Activated CD8-positive, alpha-beta T cell treated with anti-CD3 and anti-CD28 coated beads, Interleukin-2, amount 10 ng/mL, durations not matched to agents 7 days and 5 days (primary cell): ENCODE measurements at regions of chr2 and their contacts with region 1.

Region 1: DNA sequence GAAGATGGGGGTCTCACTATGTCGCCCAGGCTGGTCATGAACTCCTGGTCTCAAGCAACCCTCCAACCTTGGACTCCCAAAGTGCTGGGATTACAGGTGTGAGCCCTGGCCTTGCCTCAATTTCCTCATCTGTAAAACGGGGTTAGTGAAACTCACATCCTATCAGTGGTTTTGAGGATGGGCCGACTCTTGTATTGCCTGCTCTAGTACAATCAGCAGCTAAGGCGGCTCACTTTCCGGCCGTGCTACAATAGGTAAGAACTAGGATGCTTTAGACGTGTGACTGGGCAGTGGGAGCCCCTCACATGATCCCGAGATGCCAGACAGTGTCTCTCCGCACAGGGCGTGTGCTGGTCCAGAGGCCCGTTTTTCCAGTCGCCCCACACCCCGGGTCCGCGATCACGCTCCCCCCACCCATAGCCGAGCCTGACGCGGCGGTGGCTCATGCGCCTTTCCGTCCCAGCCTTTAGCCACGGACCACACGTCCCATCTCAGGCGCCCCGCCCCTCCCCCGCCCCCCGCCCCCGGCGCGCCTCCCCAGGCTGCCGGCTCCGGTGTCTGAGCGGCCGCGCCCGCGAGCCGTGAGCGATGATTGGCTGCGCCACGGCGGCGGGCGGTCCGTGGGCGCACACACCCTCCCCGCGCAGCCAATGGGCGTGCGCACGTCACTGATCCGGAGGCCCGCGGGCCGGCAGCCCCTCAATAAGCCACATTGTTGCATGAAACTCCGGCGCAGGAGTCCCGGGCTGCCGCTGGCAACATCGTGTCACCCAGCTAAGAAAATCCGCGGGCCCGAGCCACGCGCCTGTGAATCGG is at the start of gene HK2:
- DNase-seq: peak; percentile 87
- ATAC-seq: peak; percentile 89
- H3K4me3 Mint-ChIP-seq: peak within 1 kb of the TSS; percentile 94
- H3K27ac Mint-ChIP-seq: peak within 1 kb of the TSS; percentile 93
- H3K4me1 Mint-ChIP-seq: peaks cover 50% of the 10 kb centered on the region
- H3K27me3 Mint-ChIP-seq: peaks cover 8% of the 10 kb centered on the region
- total RNA-seq, gene HK2: 42.6 to 44.7 TPM

Region 2: GRCh38 chr2:74819702-74820101 is 13.9 kb before region 1 on chr2:
- CTCF ChIA-PET with region 1: interaction called, 11 read pairs
- POLR2A ChIA-PET with region 1: interaction called, 4 read pairs
- DNase-seq: no peak
- ATAC-seq: peak; percentile 77
- H3K4me3 Mint-ChIP-seq: no peak overlapping the region
- H3K27ac Mint-ChIP-seq: no peak overlapping the region
- H3K4me1 Mint-ChIP-seq: peaks cover 20% of the 10 kb centered on the region
- H3K27me3 Mint-ChIP-seq: peaks cover 20% of the 10 kb centered on the region

Region 3: DNA sequence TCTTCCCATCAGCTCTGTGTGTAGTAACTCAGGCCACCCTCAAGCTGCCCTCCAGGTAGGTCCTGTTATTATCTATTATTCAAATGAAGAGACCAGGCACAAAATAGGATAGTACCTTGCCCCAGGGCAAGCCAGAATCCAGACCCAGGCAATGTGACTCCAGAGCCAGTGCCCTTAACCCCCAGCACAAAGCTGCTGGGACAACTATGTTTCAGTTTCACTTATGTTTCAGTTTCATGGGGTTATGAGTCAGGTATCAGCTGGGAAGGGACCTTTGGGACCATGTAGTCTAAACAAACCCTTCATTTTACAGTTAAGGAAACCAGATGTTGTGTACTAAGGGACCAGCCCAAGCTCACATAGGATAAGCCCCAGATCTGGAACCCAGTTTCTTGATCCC is 10.3 kb after region 1 on chr2:
- CTCF ChIA-PET with region 1: interaction called, 75 read pairs
- POLR2A ChIA-PET with region 1: interaction called, 11 read pairs
- DNase-seq: peak; percentile 59
- ATAC-seq: peak; percentile 83
- H3K4me3 Mint-ChIP-seq: peak overlapping the region; percentile 56
- H3K27ac Mint-ChIP-seq: peak overlapping the region; percentile 78
- H3K4me1 Mint-ChIP-seq: peaks cover 95% of the 10 kb centered on the region
- H3K27me3 Mint-ChIP-seq: no peaks in the 10 kb centered on the region

Region 4: GRCh38 chr2:74849228-74849892 is 15.7 kb after region 1 on chr2:
- CTCF ChIA-PET with region 1: interaction called, 75 read pairs
- POLR2A ChIA-PET with region 1: interaction called, 11 read pairs
- DNase-seq: peak; percentile 57
- ATAC-seq: peak; percentile 82
- H3K4me3 Mint-ChIP-seq: peak overlapping the region; percentile 69
- H3K27ac Mint-ChIP-seq: peak overlapping the region; percentile 92
- H3K4me1 Mint-ChIP-seq: peaks cover 70% of the 10 kb centered on the region
- H3K27me3 Mint-ChIP-seq: no peaks in the 10 kb centered on the region

Region 5: GRCh38 chr2:74864846-74865722 is 31.5 kb after region 1 on chr2:
- CTCF ChIA-PET with region 1: interaction called, 24 read pairs
- POLR2A ChIA-PET with region 1: interaction called, 3 read pairs
- DNase-seq: no peak
- ATAC-seq: no peak
- H3K4me3 Mint-ChIP-seq: no peak overlapping the region
- H3K27ac Mint-ChIP-seq: no peak overlapping the region
- H3K4me1 Mint-ChIP-seq: peaks cover 44% of the 10 kb centered on the region
- H3K27me3 Mint-ChIP-seq: no peaks in the 10 kb centered on the region

Region 6: GRCh38 chr2:74876081-74876886 is 42.7 kb after region 1 on chr2:
- CTCF ChIA-PET with region 1: interaction called, 87 read pairs
- POLR2A ChIA-PET with region 1: no interaction called
- DNase-seq: peak; percentile 62
- ATAC-seq: peak; percentile 86
- H3K4me3 Mint-ChIP-seq: no peak overlapping the region
- H3K27ac Mint-ChIP-seq: peak overlapping the region; percentile 37
- H3K4me1 Mint-ChIP-seq: peaks cover 5% of the 10 kb centered on the region
- H3K27me3 Mint-ChIP-seq: no peaks in the 10 kb centered on the region

Region 7: GRCh38 chr2:75055820-75056675 is 222.4 kb after region 1 on chr2:
- CTCF ChIA-PET with region 1: no interaction called
- POLR2A ChIA-PET with region 1: no interaction called
- DNase-seq: no peak
- ATAC-seq: no peak
- H3K4me3 Mint-ChIP-seq: no peak overlapping the region
- H3K27ac Mint-ChIP-seq: no peak overlapping the region
- H3K4me1 Mint-ChIP-seq: peaks cover 12% of the 10 kb centered on the region
- H3K27me3 Mint-ChIP-seq: no peaks in the 10 kb centered on the region